ENCODE measurements at regions of chr10 and their contacts with region 1.

Region 1: DNA sequence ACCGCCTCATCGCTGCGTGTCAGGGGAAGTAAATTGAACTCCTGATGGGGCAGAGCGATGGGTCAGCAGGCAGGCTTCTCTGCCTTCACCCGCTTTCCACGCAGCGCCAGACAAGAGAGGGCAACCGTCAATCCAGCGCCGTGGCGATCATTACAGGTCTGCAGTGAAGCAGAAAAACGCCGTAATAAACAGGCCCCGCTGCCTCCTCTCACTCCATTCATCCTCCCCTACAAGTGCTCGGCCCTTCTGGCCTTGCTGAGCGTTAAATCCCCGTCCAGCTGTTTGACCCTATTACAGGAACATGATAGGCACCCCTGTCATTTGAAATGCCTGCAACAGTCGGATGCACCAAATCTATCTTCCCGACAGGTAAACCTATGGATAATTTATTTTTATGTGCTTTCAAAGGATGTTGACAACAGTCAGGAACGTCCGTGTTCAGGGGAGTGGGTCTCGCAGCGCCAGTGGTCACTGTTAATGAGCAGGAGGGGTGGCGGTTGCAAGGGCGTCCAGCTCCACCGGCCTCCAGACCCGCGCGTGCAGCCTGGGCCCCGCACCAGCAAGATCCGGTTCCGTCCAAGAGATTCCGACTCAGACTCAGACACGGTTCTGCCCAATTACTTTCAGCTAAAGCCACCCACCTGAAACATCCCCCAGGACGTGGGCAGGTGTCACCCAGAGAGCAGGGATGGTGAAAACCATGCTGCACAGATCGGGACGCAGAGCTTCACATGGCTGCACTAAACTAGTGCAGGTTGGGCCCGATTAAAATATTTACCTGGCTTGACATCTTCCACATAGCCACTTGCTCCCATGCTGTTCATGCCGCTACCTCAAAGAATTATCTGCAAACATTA is 508.0 kb upstream of the MGMT start:
- DNase-seq: no peak
- H3K4me3 ChIP-seq: no peak overlapping the region
- H3K27ac ChIP-seq: no peak overlapping the region
- H3K4me1 ChIP-seq: no peaks in the 10 kb centered on the region
- H3K27me3 ChIP-seq: no peaks in the 10 kb centered on the region
- CTCF ChIP-seq: no peak
- EP300 ChIP-seq: no peak
- POLR2A ChIP-seq: no peak

Region 2: GRCh38 chr10:128924918-128925317 is 34.1 kb before region 1 on chr10:
- intact Hi-C with region 1: loop called in 1 of 4 experiments (anchors 1 kb)
- DNase-seq: no peak
- H3K4me3 ChIP-seq: no peak overlapping the region
- H3K27ac ChIP-seq: no peak overlapping the region
- H3K4me1 ChIP-seq: peaks cover 1% of the 10 kb centered on the region
- H3K27me3 ChIP-seq: no peaks in the 10 kb centered on the region
- CTCF ChIP-seq: no peak
- EP300 ChIP-seq: no peak
- POLR2A ChIP-seq: no peak

Region 3: GRCh38 chr10:128993443-128993842 is 34.4 kb after region 1 on chr10:
- intact Hi-C with region 1: no loop called
- DNase-seq: no peak
- H3K4me3 ChIP-seq: no peak overlapping the region
- H3K27ac ChIP-seq: no peak overlapping the region
- H3K4me1 ChIP-seq: no peaks in the 10 kb centered on the region
- H3K27me3 ChIP-seq: no peaks in the 10 kb centered on the region
- CTCF ChIP-seq: no peak
- EP300 ChIP-seq: no peak
- POLR2A ChIP-seq: no peak

Measured in ovary (tissue), 10 donors.